H1 (cell line): ENCODE measurements at regions of chr9 and their contacts with region 1.

Region 1: DNA sequence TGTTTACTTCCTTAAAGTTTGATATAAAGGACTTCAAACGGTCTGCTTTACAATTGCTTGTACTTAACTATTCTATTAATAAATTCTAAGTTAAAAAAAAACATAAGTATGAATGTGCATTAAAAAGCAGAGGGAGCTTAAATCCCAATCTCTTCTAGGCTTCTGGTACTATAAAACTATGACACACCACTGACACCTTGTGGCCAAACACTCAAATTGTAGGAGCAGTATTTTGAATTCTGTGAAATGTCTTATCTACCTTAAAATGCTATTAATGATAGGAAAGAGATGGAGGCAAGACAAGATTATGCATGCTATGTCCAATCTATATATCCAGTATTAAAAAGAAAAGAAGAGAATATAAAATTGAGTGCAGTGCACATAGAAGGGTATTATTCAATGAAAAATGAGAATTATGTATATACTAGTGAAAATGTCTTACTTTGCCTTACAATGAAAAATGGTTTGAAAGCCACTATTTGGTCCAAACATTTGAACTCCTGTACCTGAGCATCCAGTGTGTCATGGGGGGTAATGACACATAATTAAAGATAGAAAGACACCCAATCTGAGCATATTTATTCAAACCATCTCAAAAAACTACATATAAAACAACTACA is 87.6 kb downstream of the ERP44 start:
- DNase-seq: no peak
- H3K4me3 ChIP-seq: no peak overlapping the region
- H3K27ac ChIP-seq: no peak overlapping the region
- H3K4me1 ChIP-seq: no peaks in the 10 kb centered on the region
- H3K27me3 ChIP-seq: no peaks in the 10 kb centered on the region
- CTCF ChIP-seq: peak in 2 of 3 experiments; percentile 55 to 56; a peak in 2 of 4 replicates
- EP300 ChIP-seq: no peak
- POLR2A ChIP-seq: no peak
- RAD21 ChIP-seq: peak; percentile 84 to 88

Region 2: DNA sequence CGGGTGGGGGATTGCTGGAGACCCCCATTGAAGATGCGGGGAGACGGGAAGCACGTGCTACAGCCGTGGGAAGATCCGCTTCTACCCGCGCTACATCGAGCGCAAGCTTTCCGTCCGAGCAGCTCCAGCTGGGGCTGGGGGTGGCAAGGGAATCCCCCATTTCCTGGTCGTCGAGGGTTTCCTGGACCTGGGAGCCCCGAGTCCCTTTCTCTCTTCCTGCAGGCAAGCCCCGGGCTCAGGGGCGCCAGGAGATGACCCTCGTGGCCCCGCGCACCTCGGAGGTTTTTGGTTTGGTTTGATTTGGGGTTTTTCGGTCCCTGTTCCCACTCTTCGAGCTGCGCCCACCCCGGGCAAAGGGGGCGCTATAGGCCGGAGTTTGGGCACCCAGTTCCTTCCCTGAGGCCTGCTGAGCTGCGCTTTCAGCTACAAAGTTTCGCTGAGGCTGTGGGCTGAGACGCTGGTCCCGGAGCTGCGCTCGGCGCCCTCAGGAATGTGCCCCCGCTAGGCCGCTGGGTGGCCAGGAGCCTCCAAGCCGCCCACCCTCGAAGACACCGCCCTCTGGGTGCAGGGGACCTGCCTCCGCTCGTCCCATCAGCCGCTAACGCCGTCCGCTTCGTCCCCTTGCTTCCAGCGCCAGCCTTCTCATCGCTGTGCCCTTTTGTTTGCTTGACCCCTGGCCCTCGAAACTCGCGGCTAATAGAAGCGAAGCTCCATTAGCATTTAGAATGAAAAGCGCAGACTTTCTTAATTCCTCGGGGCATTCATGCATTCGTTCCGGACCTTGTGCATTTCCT is 186.6 kb before region 1 on chr9:
- CTCF ChIA-PET with region 1: interaction called, 13 read pairs
- POLR2A ChIA-PET with region 1: no interaction called
- DNase-seq: peak in 1 of 2 experiments; percentile 93
- H3K4me3 ChIP-seq: peak overlapping the region; percentile 58 to 68 (median 66)
- H3K27ac ChIP-seq: no peak overlapping the region
- H3K4me1 ChIP-seq: peaks cover 0 to 35% (median 18%) of the 10 kb centered on the region in 4 experiments; a peak in 6 of 7 replicates
- H3K27me3 ChIP-seq: peaks cover 65 to 95% (median 90%) of the 10 kb centered on the region in 4 experiments
- CTCF ChIP-seq: peak in 2 of 3 experiments; percentile 68 to 78; a peak in 3 of 4 replicates
- EP300 ChIP-seq: no peak
- POLR2A ChIP-seq: peak in 1 of 2 experiments; percentile 39; a peak in 1 of 3 replicates
- RAD21 ChIP-seq: peak; percentile 80 to 83

Region 3: GRCh38 chr9:100033877-100034551 is 22.8 kb after region 1 on chr9:
- CTCF ChIA-PET with region 1: no interaction called
- POLR2A ChIA-PET with region 1: no interaction called
- DNase-seq: no peak
- H3K4me3 ChIP-seq: no peak overlapping the region
- H3K27ac ChIP-seq: no peak overlapping the region
- H3K4me1 ChIP-seq: no peaks in the 10 kb centered on the region
- H3K27me3 ChIP-seq: no peaks in the 10 kb centered on the region
- CTCF ChIP-seq: no peak
- EP300 ChIP-seq: no peak
- POLR2A ChIP-seq: no peak
- RAD21 ChIP-seq: no peak

Region 4: GRCh38 chr9:100058699-100059579 is 47.8 kb after region 1 on chr9:
- CTCF ChIA-PET with region 1: no interaction called
- POLR2A ChIA-PET with region 1: no interaction called
- DNase-seq: no peak
- H3K4me3 ChIP-seq: no peak overlapping the region
- H3K27ac ChIP-seq: no peak overlapping the region
- H3K4me1 ChIP-seq: no peaks in the 10 kb centered on the region; a peak in 1 of 7 replicates
- H3K27me3 ChIP-seq: no peaks in the 10 kb centered on the region
- CTCF ChIP-seq: no peak
- EP300 ChIP-seq: no peak
- POLR2A ChIP-seq: no peak
- RAD21 ChIP-seq: no peak

Region 5: DNA sequence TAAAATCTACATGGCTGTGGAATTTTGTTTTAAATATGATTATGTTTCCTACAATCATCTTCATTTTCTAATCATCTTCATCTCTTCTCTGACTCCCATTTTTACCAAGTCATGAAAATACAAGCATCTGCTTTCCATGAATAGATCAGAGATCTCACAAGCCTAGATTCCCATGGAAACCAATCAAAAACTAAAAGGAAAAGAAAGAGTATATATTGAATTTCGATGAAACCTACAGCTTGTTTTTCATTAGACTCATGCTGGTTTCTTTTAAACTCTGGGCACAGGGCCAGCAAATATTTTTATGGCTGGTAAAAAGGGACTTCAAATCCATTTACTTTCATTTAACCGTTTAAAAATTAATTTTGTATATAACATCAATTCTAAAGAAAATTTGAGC is 139.0 kb after region 1 on chr9:
- CTCF ChIA-PET with region 1: no interaction called
- POLR2A ChIA-PET with region 1: no interaction called
- DNase-seq: no peak
- H3K4me3 ChIP-seq: no peak overlapping the region
- H3K27ac ChIP-seq: no peak overlapping the region
- H3K4me1 ChIP-seq: peaks cover 0 to 7% (median 3%) of the 10 kb centered on the region in 4 experiments; a peak in 2 of 7 replicates
- H3K27me3 ChIP-seq: no peaks in the 10 kb centered on the region
- CTCF ChIP-seq: no peak
- EP300 ChIP-seq: no peak
- POLR2A ChIP-seq: no peak
- RAD21 ChIP-seq: no peak